ENCODE measurements at regions of chr5 and their contacts with region 1.

Region 1: GRCh38 chr5:58460732-58461286 is 923 bp upstream of the PLK2 start:
- DNase-seq: peak; percentile 90
- H3K4me3 Mint-ChIP-seq: peak overlapping the region; percentile 78
- H3K27ac Mint-ChIP-seq: peak overlapping the region; percentile 62
- H3K4me1 Mint-ChIP-seq: peaks cover 30% of the 10 kb centered on the region
- H3K27me3 Mint-ChIP-seq: peaks cover 18% of the 10 kb centered on the region

Region 2: GRCh38 chr5:57298295-57298984 is 1162.4 kb before region 1 on chr5:
- CTCF ChIA-PET with region 1: interaction called, 36 read pairs
- POLR2A ChIA-PET with region 1: interaction called, 4 read pairs
- DNase-seq: peak; percentile 83
- H3K4me3 Mint-ChIP-seq: peak overlapping the region; percentile 13
- H3K27ac Mint-ChIP-seq: no peak overlapping the region
- H3K4me1 Mint-ChIP-seq: peaks cover 21% of the 10 kb centered on the region
- H3K27me3 Mint-ChIP-seq: no peaks in the 10 kb centered on the region

Region 3: DNA sequence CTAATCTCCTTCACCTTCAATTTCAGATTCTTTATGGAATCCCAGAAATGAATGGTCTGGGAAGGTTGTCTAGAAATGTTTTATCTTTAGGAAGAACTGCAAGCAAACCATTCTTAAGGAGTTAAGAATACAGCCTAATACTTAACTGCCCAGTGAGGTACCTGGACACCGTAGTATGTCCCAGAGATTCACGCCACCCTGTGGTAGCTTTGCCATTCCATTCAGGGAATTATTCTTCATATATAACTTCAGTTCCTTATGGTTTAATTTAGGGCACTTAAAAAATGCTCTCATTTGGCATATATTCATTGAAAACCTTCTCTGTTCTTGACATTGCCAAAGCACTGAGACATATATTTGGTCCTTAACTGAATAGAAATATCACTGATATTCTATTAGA is 1027.9 kb before region 1 on chr5:
- CTCF ChIA-PET with region 1: no interaction called
- POLR2A ChIA-PET with region 1: no interaction called
- DNase-seq: no peak
- H3K4me3 Mint-ChIP-seq: no peak overlapping the region
- H3K27ac Mint-ChIP-seq: no peak overlapping the region
- H3K4me1 Mint-ChIP-seq: no peaks in the 10 kb centered on the region
- H3K27me3 Mint-ChIP-seq: peaks cover 3% of the 10 kb centered on the region

Region 4: GRCh38 chr5:57499262-57500050 is 961.4 kb before region 1 on chr5:
- CTCF ChIA-PET with region 1: interaction called, 58 read pairs
- POLR2A ChIA-PET with region 1: no interaction called
- DNase-seq: peak; percentile 24
- H3K4me3 Mint-ChIP-seq: peak overlapping the region; percentile 49
- H3K27ac Mint-ChIP-seq: peak overlapping the region; percentile 41
- H3K4me1 Mint-ChIP-seq: peaks cover 31% of the 10 kb centered on the region
- H3K27me3 Mint-ChIP-seq: peaks cover 2% of the 10 kb centered on the region

Region 5: DNA sequence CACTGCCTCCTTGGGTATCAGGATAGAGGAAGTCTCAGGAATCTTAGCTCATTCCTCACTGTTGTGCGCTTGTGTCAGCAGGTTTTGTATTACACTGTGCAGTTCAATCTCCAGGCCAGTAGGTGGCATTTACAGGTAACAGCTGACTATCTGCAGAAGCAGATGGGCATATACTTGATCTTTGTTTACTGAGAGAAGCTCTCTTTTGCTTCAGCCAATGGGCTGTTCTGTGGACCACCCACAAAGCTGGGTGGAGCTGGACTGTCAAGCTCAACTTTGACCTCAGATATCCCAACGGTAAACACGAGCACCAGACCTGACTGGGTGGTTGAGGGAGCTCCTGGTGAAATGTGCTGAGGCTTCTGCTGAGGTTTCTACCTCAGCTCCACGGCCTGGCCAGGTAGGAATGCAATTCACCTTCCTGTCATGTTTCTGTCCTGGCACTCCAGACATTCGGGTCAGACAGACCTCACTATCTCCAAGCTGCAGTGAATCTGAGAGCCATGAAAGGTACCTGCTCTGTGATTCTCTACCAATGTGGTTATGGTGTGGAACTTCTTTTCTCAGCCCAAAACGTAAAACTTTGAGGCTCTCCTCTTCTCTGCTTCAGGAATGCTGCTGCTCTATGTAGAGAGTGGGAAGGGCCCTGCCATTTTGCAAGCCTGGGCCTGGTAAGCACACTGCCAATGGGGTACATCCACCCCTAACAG is 810.3 kb before region 1 on chr5:
- CTCF ChIA-PET with region 1: interaction called, 24 read pairs
- POLR2A ChIA-PET with region 1: interaction called, 3 read pairs
- DNase-seq: peak; percentile 21
- H3K4me3 Mint-ChIP-seq: no peak overlapping the region
- H3K27ac Mint-ChIP-seq: no peak overlapping the region
- H3K4me1 Mint-ChIP-seq: no peaks in the 10 kb centered on the region
- H3K27me3 Mint-ChIP-seq: peaks cover 5% of the 10 kb centered on the region

Region 6: GRCh38 chr5:57779383-57780223 is 681.2 kb before region 1 on chr5:
- CTCF ChIA-PET with region 1: interaction called, 31 read pairs
- POLR2A ChIA-PET with region 1: interaction called, 5 read pairs
- DNase-seq: no peak
- H3K4me3 Mint-ChIP-seq: no peak overlapping the region
- H3K27ac Mint-ChIP-seq: no peak overlapping the region
- H3K4me1 Mint-ChIP-seq: no peaks in the 10 kb centered on the region
- H3K27me3 Mint-ChIP-seq: peaks cover 2% of the 10 kb centered on the region

Region 7: GRCh38 chr5:57887851-57888621 is 572.8 kb before region 1 on chr5:
- CTCF ChIA-PET with region 1: interaction called, 10 read pairs
- POLR2A ChIA-PET with region 1: no interaction called
- DNase-seq: no peak
- H3K4me3 Mint-ChIP-seq: no peak overlapping the region
- H3K27ac Mint-ChIP-seq: no peak overlapping the region
- H3K4me1 Mint-ChIP-seq: no peaks in the 10 kb centered on the region
- H3K27me3 Mint-ChIP-seq: no peaks in the 10 kb centered on the region

Region 8: DNA sequence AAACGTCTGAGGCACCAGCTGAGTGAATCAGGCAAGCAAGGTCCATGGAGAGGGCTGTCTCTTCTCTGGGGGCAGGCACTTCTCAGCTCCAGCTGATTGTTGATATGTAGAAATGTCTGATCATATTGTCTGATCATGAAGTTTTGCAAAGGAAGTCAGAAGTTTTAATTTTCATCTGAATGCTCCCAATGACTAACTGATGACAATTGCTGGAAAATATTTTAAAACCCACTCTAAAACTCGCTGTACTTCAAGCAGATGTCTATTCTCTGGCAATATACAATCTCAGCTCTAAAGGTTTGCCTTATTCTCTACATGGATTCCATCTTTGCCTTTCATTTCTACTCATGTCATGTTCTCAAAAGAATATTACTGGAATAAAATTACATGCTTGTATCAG is 13.6 kb before region 1 on chr5:
- CTCF ChIA-PET with region 1: interaction called, 16 read pairs
- POLR2A ChIA-PET with region 1: interaction called, 5 read pairs
- DNase-seq: no peak
- H3K4me3 Mint-ChIP-seq: no peak overlapping the region
- H3K27ac Mint-ChIP-seq: no peak overlapping the region
- H3K4me1 Mint-ChIP-seq: no peaks in the 10 kb centered on the region
- H3K27me3 Mint-ChIP-seq: peaks cover 4% of the 10 kb centered on the region

Region 9: GRCh38 chr5:58491216-58491892 is 30.5 kb after region 1 on chr5 and contains the start of gene GAPT:
- CTCF ChIA-PET with region 1: no interaction called
- POLR2A ChIA-PET with region 1: no interaction called
- DNase-seq: no peak
- H3K4me3 Mint-ChIP-seq: no peak within 1 kb of the TSS
- H3K27ac Mint-ChIP-seq: no peak within 1 kb of the TSS
- H3K4me1 Mint-ChIP-seq: no peaks in the 10 kb centered on the region
- H3K27me3 Mint-ChIP-seq: peaks cover 13% of the 10 kb centered on the region
- total RNA-seq, gene GAPT: not detected